Sigmoid colon (tissue), 7 donors: ENCODE measurements at regions of chr2 and their contacts with region 1.

Region 1: GRCh38 chr2:164737612-164738081 is 104.0 kb downstream of the COBLL1 start:
- DNase-seq: peak; percentile 79
- H3K4me3 ChIP-seq: no peak overlapping the region
- H3K27ac ChIP-seq: no peak overlapping the region
- H3K4me1 ChIP-seq: peaks cover 0 to 23% (median 12%) of the 10 kb centered on the region in 4 donors
- H3K27me3 ChIP-seq: no peaks in the 10 kb centered on the region
- CTCF ChIP-seq: peak; percentile 39 to 71 (median 70)
- EP300 ChIP-seq: no peak
- POLR2A ChIP-seq: no peak

Region 2: GRCh38 chr2:164917296-164917903 is 179.8 kb after region 1 on chr2:
- intact Hi-C with region 1: loop called (anchors 1 kb)
- DNase-seq: peak; percentile 67
- H3K4me3 ChIP-seq: no peak overlapping the region
- H3K27ac ChIP-seq: peak overlapping the region in 1 of 4 donors; percentile 38
- H3K4me1 ChIP-seq: peaks cover 0 to 4% (median 0%) of the 10 kb centered on the region in 4 donors
- H3K27me3 ChIP-seq: no peaks in the 10 kb centered on the region
- CTCF ChIP-seq: peak in 3 of 4 experiments; percentile 29 to 54 (median 47)
- EP300 ChIP-seq: no peak
- POLR2A ChIP-seq: no peak

Region 3: DNA sequence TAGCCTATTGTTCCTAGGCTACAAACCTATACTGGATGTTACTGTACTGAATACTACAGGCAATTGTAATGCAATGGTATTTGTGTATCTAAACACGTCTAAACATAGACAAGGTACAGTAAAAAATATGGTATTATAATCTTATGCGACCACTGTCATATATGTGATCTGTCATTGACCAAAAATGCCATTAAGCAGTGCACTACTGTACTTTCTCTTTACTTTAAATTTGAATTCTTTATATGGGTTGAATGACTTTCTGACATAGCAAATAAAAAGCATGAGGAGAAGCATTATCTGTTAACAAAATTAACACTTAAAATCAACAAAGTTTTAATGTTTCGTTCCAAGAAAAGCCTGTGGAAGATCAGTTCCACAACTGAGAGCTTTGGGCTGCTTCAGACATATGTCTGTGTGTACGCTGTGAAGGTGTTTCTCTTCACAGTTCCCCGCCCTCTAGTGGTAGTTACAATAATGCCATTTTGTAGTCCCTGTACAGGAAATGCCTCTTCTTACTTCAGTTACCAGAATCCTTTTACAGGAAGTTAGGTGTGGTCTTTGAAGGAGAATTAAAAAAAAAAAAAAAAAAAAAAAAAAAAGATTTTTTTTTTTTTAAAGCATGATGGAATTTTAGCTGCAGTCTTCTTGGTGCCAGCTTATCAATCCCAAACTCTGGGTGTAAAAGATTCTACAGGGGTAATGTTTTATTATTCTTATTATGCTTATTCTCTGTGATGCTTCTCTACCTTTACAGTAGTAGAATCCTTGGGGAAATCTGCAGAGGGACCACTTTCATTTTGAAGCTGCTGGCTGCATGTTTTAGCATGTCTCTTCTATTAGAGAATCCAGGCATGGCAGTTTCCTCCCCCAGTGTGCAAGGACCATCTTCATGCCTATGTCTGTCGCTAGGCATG is 556.0 kb after region 1 on chr2:
- intact Hi-C with region 1: loop called (anchors 10 kb)
- DNase-seq: no peak
- H3K4me3 ChIP-seq: peak overlapping the region; percentile 7 to 20 (median 8)
- H3K27ac ChIP-seq: no peak overlapping the region
- H3K4me1 ChIP-seq: peaks cover 0 to 3% (median 0%) of the 10 kb centered on the region in 4 donors
- H3K27me3 ChIP-seq: no peaks in the 10 kb centered on the region
- CTCF ChIP-seq: peak in 3 of 4 experiments; percentile 33 to 59 (median 34)
- EP300 ChIP-seq: no peak
- POLR2A ChIP-seq: no peak